AG04449 (cell line): ENCODE measurements at regions of chr6 and their contacts with region 1.

Region 1: GRCh38 chr6:56595490-56596122 is 47.1 kb downstream of the DST start:
- DNase-seq: no peak
- H3K4me3 ChIP-seq: no peak overlapping the region
- CTCF ChIP-seq: peak; percentile 32

Region 2: DNA sequence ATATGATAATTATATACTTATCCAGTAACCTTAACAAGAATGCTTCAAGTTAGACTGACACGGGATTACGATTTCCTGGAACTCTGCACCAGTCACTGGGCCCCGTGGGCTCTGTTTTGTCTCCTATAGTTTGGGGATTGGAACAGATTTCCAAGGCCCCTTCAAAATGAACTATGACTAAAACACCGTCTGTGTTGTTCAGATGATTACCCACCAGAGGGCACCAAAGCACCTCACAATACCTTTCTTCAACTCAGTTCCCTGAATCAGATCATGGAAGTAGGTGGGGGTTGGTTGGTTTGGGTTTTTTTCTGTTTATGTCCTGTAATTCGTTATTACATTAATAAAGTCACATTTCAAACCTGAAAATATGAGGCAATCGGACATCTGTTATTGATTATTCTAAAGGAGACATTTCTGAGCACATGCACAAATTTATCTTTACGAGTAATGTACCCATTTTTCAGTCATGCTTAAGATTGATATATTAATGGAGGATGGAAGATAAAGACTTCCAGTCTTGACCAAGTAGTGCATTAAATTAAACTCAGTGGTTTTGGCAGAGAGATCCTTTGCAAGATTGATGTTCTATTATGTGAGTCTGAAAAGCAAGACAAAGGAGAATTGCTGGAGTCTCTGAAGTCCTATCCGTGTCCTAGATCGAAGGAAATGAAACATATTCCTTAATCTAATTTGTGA is 236.3 kb before region 1 on chr6:
- CTCF ChIA-PET with region 1: interaction called, 175 read pairs
- POLR2A ChIA-PET with region 1: interaction called, 4 read pairs
- DNase-seq: no peak
- H3K4me3 ChIP-seq: no peak overlapping the region
- CTCF ChIP-seq: peak; percentile 66

Region 3: GRCh38 chr6:56370561-56371211 is 224.9 kb before region 1 on chr6:
- CTCF ChIA-PET with region 1: interaction called, 27 read pairs
- POLR2A ChIA-PET with region 1: no interaction called
- DNase-seq: peak; percentile 53
- H3K4me3 ChIP-seq: no peak overlapping the region
- CTCF ChIP-seq: no peak

Region 4: DNA sequence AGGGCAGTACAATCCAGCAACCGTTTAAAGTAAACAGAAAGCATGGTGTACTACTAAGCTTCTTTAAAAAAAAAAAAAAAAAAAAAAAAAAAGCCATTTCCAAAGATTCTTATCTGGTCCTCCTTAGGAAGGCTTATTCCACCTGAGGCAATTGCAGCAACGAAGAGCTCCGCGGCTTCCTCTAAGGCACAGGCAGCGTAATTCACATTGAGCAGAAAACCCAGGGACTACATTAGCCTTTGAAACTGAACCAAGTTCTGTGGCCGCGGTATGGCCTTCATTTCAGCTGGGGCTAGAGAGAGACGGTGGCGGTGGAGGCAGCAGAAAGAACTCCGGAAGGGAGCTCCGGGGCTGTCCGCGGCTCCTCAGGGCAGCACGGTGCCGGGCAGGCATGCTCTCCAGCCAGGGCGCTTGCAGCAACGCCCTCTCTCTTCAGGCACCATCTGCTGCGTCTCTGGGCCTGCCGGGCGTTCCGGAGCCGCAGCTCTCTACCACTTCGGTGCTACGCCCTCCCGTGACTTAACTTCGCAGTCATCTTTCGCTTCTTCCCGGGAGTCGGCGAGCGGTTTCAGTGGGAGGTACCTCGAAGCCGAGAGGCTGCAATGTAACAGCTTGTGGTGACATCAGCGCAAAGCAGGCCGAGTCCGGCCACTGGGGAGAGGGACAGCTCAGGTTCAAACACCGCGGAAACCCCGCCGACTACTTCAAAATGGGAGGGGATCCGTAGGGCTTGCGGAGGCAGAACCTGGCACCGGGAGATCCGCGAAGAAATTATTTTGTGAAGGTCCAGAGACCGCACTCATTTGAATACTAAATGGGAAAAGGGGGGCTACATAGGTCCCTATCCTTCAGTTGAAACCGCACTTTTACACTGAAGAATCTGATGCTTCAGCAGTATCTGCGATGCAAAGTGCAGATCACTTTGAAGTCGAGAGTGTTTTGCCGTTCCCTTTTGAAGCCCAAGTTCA is 53.0 kb before region 1 on chr6:
- CTCF ChIA-PET with region 1: interaction called, 12 read pairs
- POLR2A ChIA-PET with region 1: no interaction called
- DNase-seq: peak; percentile 89
- H3K4me3 ChIP-seq: peak overlapping the region; percentile 63
- CTCF ChIP-seq: peak; percentile 31

Region 5: DNA sequence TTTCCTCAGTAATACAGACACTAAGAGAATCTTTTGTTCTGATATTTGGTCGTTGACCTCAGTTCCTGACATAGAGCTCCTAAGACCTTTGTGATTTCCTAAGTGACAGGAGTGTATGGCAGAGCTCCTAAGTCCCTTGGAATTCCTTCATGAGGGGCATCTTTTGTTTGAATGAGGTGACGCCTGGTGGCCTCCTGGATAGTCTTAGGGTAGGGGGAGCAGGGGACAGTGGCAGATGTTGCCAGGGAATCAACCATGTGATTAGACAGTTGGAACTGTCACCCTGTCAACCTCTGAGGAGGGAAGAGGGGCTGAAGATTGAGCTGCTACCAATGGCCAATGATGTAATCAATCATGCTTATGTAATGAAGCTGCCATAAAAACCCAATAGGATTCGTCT is 19.9 kb before region 1 on chr6:
- CTCF ChIA-PET with region 1: interaction called, 55 read pairs
- POLR2A ChIA-PET with region 1: no interaction called
- DNase-seq: no peak
- H3K4me3 ChIP-seq: no peak overlapping the region
- CTCF ChIP-seq: no peak

Region 6: DNA sequence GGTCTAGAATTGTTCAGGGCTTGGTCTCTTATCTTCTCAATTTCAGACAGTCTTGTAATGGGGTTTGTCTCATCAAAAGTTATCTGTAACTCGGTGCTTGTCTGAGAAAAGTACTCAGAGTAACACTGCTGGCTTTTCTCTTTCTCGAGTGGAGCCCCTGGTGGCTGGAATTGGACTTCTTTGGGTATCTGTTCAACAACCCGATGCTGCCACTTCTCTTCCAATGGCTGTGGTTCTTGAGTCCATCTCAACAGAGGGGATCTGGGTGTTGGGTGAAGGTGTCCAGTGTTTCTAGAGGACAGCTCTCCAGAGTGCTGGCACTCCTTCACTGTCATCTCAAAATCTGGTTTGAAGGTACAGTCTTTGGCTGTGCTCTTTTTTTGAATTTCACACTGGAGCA is 22.4 kb after region 1 on chr6:
- CTCF ChIA-PET with region 1: interaction called, 99 read pairs
- POLR2A ChIA-PET with region 1: interaction called, 3 read pairs
- DNase-seq: no peak
- H3K4me3 ChIP-seq: no peak overlapping the region
- CTCF ChIP-seq: no peak

Region 7: DNA sequence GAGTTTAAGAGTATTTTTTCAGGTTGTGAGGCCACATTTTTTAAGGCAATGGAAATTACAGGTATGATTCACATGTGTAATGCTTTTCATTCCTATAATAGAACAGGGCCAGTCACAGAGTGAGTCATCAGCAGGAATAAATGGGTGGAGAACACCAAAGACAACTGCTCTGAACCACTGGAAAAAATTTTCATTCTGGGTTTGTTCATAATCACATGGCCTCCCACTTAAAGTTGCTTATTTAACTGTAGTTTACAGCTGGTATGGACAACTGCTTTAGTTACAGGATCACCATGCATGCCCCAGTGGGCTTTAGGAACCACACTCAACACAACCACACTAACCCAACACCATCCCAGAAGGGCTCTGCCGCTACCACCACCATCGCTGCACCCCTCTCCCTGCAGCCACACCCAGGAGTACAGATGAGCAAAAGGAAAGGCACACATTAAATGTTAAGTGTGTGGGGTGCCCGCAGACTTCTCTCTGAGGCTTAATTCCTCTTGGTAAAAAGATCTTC is 154.1 kb after region 1 on chr6:
- CTCF ChIA-PET with region 1: no interaction called
- POLR2A ChIA-PET with region 1: no interaction called
- DNase-seq: no peak
- H3K4me3 ChIP-seq: no peak overlapping the region
- CTCF ChIP-seq: no peak